ENCODE measurements at regions of chr16 and their contacts with region 1.

Region 1: DNA sequence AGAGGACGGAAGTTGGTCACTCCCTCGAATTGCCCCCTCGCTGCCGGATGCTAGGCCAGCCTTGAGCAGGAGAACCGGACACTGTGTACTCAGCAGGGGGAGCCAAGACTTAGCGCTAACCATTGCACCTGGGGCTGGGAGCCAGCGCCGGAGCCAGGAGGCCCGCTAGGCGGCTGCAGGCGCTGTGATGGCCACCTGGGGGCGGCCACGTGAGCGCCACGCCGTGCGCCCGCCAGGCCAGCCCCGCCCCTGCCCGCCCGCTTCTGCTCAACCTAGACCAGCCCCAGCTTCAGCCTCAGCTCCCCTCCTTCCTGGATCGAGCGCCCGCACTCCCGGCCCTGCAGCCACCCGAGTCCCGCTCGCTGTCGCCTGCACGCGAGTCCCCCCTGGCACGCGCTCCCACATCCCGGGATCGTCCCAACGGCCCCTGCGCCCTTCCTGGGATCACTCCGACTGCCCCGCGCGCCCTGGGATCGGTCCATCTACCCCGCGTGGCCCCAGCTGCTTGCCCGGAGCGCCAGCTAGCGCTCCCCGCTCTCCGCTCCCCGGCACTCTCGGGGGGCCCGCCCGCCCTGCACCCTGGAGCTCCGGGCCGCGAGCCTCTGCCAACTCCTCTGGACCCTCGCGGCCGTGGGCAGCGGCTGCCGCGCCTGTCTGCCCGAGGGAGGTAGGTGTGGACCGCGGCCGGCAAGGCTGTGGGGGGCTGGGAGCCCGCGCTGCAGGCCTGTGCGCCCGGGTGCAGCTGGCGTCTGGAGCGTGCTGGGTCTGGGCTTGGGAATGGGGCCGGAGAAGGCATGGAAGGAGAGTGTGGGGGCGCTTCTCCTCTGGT is at the start of gene EEF2K:
- H3K4me3 ChIP-seq: peak within 1 kb of the TSS; percentile 91
- H3K27ac ChIP-seq: peak within 1 kb of the TSS; percentile 68; the same call in 1 of the 2 replicates
- H3K4me1 ChIP-seq: no peaks in the 10 kb centered on the region
- CTCF ChIP-seq: peak; percentile 97

Region 2: GRCh38 chr16:22165508-22166285 is 40.5 kb before region 1 on chr16:
- CTCF ChIA-PET with region 1: no interaction called
- POLR2A ChIA-PET with region 1: no interaction called
- H3K4me3 ChIP-seq: no peak overlapping the region
- H3K27ac ChIP-seq: no peak overlapping the region
- H3K4me1 ChIP-seq: no peaks in the 10 kb centered on the region
- CTCF ChIP-seq: no peak

Region 3: DNA sequence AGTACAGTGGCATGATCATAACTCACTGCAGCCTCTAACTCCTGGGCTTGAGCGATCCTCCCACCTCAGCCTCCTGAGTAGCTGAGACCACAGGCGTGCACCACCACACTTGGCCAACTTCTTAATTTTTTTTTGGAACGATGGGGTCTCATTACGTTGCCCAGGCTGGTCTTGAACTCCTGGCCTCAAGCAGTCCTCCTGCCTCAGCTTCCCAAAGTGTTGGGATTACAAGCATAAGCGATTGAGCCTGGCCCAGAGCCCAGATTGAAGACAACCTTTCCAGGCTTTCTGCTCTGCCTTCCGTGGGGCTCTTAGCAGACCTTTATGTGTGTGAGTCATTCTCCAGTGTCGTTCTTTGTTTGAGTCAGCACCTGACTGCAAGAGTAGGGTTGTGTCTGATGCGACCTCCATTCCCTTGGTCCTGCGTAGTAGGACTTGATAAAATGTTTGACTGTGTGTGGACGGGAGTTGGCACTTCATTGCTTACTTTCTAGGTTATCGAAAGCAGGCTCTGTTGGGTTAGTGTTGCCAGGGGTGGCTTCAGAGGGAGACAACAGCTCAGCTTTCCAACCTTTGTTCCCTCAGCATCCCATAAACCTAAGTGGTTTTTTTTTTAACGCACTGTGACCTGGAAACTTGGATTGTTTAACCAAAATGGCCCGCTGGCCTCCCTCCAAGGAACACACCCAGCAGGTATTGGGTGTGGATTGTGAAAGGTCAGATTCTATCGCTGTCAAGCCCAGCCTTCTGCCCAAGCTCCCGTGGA is 26.2 kb after region 1 on chr16:
- CTCF ChIA-PET with region 1: interaction called, 5 read pairs
- POLR2A ChIA-PET with region 1: interaction called, 12 read pairs
- H3K4me3 ChIP-seq: no peak overlapping the region
- H3K27ac ChIP-seq: peak overlapping the region; percentile 90
- H3K4me1 ChIP-seq: peaks cover 12% of the 10 kb centered on the region; the same call in 1 of the 2 replicates
- CTCF ChIP-seq: no peak

Region 4: DNA sequence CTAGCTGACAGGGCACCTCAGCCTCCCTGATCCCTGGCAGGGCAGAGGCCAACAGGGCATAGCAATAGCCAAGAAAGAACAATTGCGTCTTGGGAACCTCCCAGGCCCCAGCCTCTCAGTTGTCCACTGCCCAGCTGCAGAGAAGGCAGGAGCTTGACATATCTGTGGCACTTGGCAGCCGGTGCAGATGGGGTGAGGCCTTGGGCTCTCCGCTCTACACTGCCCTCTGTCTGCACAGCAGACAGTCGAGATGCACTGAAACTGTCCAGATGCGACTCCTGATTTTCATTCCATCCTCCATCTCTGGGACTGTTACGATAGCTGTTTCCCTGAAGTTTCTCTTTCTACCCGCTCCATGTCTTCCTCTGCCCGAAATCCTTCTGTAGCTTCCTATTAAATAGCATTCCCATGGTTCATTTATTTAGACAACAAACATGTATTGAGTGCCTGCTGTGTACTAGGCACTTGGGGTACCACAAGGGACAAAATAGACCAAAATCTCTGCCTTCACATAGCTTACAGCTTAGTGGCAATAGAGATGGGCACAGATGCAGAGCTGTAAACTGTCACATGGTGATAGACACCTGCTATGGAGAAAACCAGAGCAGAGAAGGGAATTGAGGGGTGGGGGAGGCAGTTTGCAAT is 94.3 kb after region 1 on chr16:
- CTCF ChIA-PET with region 1: interaction called, 15 read pairs
- POLR2A ChIA-PET with region 1: interaction called, 7 read pairs
- H3K4me3 ChIP-seq: no peak overlapping the region
- H3K27ac ChIP-seq: no peak overlapping the region
- H3K4me1 ChIP-seq: no peaks in the 10 kb centered on the region
- CTCF ChIP-seq: peak; percentile 59; the same call in 1 of the 2 replicates

Region 5: GRCh38 chr16:22614271-22614947 is 408.2 kb after region 1 on chr16:
- CTCF ChIA-PET with region 1: no interaction called
- POLR2A ChIA-PET with region 1: no interaction called
- H3K4me3 ChIP-seq: no peak overlapping the region
- H3K27ac ChIP-seq: no peak overlapping the region
- H3K4me1 ChIP-seq: no peaks in the 10 kb centered on the region
- CTCF ChIP-seq: no peak